Transverse colon (tissue), 4 donors: ENCODE measurements at regions of chr19 and their contacts with region 1.

Region 1: DNA sequence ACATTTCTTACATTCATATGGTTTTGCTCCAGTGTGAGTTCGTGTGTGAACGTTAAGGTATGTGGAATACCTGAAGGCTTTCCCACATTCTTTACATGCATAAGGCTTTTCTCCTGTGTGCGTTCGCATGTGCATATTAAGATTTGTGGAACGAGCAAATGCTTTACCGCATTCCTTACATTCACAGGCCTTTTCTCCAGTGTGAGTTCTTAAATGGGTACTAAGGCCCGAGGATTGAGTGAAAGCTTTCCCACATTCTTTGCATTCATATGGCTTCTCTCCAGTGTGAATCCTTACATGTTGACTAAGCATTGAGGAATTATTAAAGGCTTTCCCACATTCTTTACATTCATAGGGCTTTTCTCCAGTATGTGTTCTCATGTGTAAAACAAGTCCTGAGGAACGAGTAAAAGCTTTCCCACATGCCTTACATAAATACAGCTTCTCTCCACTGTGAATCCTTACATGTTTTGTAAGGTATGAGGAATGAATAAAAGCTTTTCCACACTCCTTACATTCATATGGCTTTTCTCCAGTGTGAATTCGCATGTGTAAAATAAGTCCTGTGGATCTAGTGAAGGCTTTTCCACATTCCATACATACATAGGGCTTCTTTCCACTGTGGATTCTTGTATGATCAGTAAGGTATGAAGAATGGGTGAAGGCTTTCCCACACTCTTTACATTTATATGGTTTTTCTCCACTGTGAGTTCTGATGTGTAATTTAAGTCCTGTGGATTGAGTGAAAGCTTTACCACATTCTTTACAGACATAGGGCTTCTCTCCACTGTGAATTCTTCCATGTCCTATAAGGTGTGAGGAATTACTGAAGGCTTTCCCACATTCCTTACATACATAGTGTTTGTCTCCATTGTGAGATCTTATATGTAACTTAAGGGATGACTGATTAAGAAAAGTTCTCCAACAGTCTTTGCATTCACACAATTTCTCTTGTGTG is 10.7 kb downstream of the ZNF846 start:
- DNase-seq: no peak
- H3K4me3 ChIP-seq: no peak overlapping the region
- H3K27ac ChIP-seq: no peak overlapping the region
- H3K4me1 ChIP-seq: no peaks in the 10 kb centered on the region
- H3K27me3 ChIP-seq: no peaks in the 10 kb centered on the region
- CTCF ChIP-seq: no peak
- EP300 ChIP-seq: no peak
- POLR2A ChIP-seq: no peak

Region 2: DNA sequence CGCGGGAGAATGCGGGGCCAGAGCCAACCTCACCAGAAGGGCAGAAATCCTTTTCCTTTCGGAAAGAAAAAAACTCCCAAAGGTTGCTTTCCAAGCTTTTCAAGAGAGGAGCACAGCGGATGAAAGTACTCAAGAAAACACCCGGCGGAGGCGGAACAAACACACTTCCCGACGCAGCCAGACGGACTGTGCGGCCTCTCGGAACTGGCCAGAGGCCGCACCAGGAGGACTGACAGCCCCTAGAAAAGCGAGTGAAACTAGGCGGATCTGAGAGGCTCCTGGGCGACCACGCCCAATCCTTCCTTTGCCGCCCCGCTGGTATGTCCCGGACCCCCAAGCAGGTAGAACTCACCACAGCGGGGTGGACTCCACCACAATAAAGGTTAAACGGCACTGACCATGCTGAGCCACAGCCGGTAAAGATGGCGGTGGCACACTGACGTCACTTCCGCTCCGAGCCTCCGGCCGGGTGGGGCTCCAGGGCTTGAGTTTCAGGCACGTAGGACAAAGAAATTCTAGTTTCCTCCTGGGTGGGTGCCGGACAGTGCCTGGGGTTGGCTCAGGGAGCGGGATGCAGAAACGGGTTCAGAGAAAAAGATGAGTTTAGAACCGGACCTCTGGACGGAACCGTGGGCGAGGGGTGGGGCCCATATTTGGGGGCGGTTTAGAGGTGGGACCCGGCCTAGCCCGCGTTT is 83.0 kb before region 1 on chr19 and contains the start of gene ZNF562:
- in situ Hi-C with region 1: loop called in 1 of 4 experiments (anchors 10 kb)
- intact Hi-C with region 1: no loop called
- DNase-seq: peak; percentile 92
- H3K4me3 ChIP-seq: peak within 1 kb of the TSS; percentile 69 to 94 (median 80)
- H3K27ac ChIP-seq: peak within 1 kb of the TSS; percentile 92 to 98 (median 94)
- H3K4me1 ChIP-seq: peaks cover 0 to 15% (median 0%) of the 10 kb centered on the region in 4 donors
- H3K27me3 ChIP-seq: no peaks in the 10 kb centered on the region
- CTCF ChIP-seq: no peak
- EP300 ChIP-seq: no peak
- POLR2A ChIP-seq: peak; percentile 74
- total RNA-seq, gene ZNF562: 5.6 to 36.8 (median 17.6) TPM

Region 3: GRCh38 chr19:9808855-9809824 is 51.3 kb after region 1 on chr19:
- in situ Hi-C with region 1: no loop called
- intact Hi-C with region 1: no loop called
- DNase-seq: no peak
- H3K4me3 ChIP-seq: no peak overlapping the region
- H3K27ac ChIP-seq: no peak overlapping the region
- H3K4me1 ChIP-seq: no peaks in the 10 kb centered on the region
- H3K27me3 ChIP-seq: no peaks in the 10 kb centered on the region
- CTCF ChIP-seq: no peak
- EP300 ChIP-seq: no peak
- POLR2A ChIP-seq: no peak

Region 4: DNA sequence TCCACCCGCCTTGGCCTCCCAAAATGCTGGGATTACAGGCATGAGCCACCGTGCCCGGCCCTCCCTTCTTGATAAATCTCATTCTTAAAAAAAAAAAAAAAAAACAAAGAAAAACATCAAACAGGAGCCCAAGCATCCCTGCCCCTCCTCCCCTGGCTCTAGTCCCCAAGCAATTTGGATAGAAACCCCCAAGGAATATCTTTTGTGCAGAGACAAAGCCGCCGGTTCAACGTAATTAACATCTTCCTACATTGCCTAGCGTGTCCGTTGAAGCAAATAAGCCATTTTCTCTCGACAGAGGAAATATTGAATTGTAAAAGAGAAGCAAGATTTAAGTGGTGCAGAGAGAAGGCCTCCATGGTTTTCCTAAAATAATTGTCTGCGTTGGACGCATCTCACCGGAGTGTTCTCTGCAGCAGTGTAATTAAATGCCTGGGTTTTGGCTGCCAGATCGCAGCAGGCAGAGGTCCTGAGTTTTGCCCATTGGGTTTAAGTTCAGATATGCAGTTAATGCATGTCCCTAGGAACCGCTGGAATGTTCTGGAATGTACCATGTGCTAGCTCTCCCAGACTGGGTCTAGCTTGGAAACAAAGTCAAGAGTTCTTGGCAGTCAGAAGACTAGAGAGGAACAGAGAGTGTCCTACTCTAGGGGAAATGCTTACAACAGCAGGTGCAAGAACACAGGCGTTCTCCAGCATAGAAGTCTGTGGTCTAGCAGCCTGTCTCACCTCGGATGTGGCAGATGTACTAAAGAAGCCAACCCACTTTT is 108.1 kb after region 1 on chr19:
- in situ Hi-C with region 1: no loop called
- intact Hi-C with region 1: no loop called
- DNase-seq: no peak
- H3K4me3 ChIP-seq: no peak overlapping the region
- H3K27ac ChIP-seq: no peak overlapping the region
- H3K4me1 ChIP-seq: no peaks in the 10 kb centered on the region
- H3K27me3 ChIP-seq: no peaks in the 10 kb centered on the region
- CTCF ChIP-seq: no peak
- EP300 ChIP-seq: no peak
- POLR2A ChIP-seq: no peak